GM12878 (cell line): ENCODE measurements at regions of chr1 and their contacts with region 1.

Region 1: GRCh38 chr1:168603501-168604110 is 27.2 kb downstream of the XCL1 start:
- DNase-seq: peak; percentile 7
- ATAC-seq: peak; percentile 99
- H3K4me3 ChIP-seq: no peak overlapping the region
- H3K27ac ChIP-seq: no peak overlapping the region
- H3K4me1 ChIP-seq: no peaks in the 10 kb centered on the region
- H3K27me3 ChIP-seq: no peaks in the 10 kb centered on the region; a peak in 1 of 4 replicates
- CTCF ChIP-seq: peak; percentile 76 to 92 (median 80)
- EP300 ChIP-seq: no peak
- POLR2A ChIP-seq: no peak
- RAD21 ChIP-seq: peak; percentile 97

Region 2: DNA sequence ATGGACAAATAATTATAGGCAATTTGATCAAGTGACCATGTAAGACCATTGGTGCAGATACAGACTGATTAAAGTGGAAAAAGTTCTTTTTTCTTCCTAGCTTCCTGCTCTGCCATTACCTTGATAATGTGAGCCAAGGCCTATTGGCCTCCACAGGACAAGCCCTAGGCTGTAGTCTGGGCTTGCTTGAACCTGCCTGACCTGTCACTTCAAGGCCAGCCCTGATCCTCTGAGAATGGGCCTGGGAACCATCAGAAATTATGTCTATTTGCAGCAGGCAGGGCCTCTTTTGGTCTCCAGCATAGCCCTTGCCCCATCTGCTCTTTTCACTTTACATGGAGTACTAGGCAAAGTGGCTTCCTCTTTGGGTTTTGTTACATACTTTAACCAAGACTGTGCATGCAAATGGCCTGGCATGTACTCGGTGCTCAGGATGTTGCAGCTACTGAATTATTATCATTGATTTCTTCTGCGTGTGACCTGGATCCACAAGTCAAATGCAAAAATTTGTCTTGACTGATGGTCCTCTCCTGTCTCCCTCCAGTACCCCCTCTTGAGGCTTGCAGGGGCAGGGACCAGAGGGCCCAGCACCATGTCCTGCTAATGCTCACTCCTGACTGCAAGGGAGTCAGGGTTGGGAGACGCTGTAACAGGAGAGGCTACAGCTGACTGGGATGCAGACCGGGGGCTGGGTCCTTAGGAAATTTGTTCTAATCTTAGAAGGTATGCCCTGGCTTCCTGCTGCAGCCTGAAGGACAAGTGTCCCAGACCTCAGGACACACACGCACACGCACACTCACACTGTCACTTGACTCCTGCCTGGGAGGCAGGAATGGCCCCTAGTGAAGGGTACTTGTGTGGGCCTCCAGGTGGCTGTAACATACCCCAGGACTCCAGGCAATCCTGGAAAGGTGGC is 934.1 kb before region 1 on chr1:
- CTCF ChIA-PET with region 1: no interaction called
- POLR2A ChIA-PET with region 1: no interaction called
- RAD21 ChIA-PET with region 1: no interaction called
- SMC1A ChIA-PET with region 1: no interaction called
- in situ Hi-C with region 1: no loop called
- intact Hi-C with region 1: no loop called
- DNase-seq: peak; percentile 66
- ATAC-seq: peak; percentile 73
- H3K4me3 ChIP-seq: no peak overlapping the region
- H3K27ac ChIP-seq: peak overlapping the region; percentile 71
- H3K4me1 ChIP-seq: peaks cover 79% of the 10 kb centered on the region
- H3K27me3 ChIP-seq: no peaks in the 10 kb centered on the region
- CTCF ChIP-seq: 0 out of 6 replicates have a peak, but pooled peaks of 1 of the 3 experiments have one; percentile 3
- EP300 ChIP-seq: no peak
- POLR2A ChIP-seq: no peak
- RAD21 ChIP-seq: no peak

Region 3: DNA sequence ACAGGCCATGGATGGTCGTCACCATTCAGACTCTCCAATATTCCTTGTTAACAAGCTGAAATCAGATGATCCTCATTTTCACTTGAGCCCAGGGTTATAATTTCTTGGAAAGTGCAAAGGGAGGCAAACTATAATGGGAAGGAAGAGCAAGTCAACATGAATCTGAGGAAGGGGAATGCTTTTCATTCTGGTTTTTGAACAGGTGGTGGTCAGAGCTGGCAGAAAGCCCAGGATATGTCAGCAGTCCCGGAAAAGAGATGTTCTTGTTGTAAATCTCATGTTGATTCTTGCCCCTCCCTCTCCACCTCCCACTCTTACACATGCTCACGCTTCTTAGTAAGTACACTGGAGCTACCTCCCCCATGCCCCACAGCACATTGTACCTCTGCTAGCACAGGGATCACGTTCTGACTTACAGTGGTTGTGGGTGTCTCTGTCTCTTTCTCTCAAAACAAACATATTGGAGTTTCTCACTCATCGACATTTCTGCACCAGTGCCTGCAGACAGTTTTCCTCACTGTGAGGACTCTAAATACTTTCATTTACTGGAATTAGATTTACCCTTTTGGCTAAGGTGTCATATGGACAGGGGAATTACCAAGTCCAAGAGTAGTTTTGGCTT is 137.4 kb before region 1 on chr1:
- CTCF ChIA-PET with region 1: interaction called, 11 read pairs
- POLR2A ChIA-PET with region 1: no interaction called
- RAD21 ChIA-PET with region 1: interaction called, 4 read pairs
- SMC1A ChIA-PET with region 1: interaction called, 8 read pairs
- in situ Hi-C with region 1: no loop called
- intact Hi-C with region 1: no loop called
- DNase-seq: peak; percentile 88
- ATAC-seq: peak; percentile 89
- H3K4me3 ChIP-seq: peak overlapping the region; percentile 25; the same call in 1 of the 2 replicates
- H3K27ac ChIP-seq: peak overlapping the region; percentile 56
- H3K4me1 ChIP-seq: peaks cover 25% of the 10 kb centered on the region
- H3K27me3 ChIP-seq: no peaks in the 10 kb centered on the region
- CTCF ChIP-seq: no peak
- EP300 ChIP-seq: peak; percentile 23 to 46; a peak in 1 of 4 replicates
- POLR2A ChIP-seq: no peak
- RAD21 ChIP-seq: no peak

Region 4: GRCh38 chr1:168553680-168554553 is 49.7 kb before region 1 on chr1:
- CTCF ChIA-PET with region 1: interaction called, 15 read pairs
- POLR2A ChIA-PET with region 1: no interaction called
- RAD21 ChIA-PET with region 1: interaction called, 16 read pairs
- SMC1A ChIA-PET with region 1: interaction called, 18 read pairs
- in situ Hi-C with region 1: no loop called
- intact Hi-C with region 1: no loop called
- DNase-seq: no peak
- ATAC-seq: peak; percentile 70
- H3K4me3 ChIP-seq: no peak overlapping the region
- H3K27ac ChIP-seq: no peak overlapping the region
- H3K4me1 ChIP-seq: no peaks in the 10 kb centered on the region; the same call in 1 of the 2 replicates
- H3K27me3 ChIP-seq: no peaks in the 10 kb centered on the region
- CTCF ChIP-seq: no peak
- EP300 ChIP-seq: peak in 1 of 2 experiments; percentile 13; a peak in 2 of 4 replicates
- POLR2A ChIP-seq: no peak
- RAD21 ChIP-seq: no peak

Region 5: DNA sequence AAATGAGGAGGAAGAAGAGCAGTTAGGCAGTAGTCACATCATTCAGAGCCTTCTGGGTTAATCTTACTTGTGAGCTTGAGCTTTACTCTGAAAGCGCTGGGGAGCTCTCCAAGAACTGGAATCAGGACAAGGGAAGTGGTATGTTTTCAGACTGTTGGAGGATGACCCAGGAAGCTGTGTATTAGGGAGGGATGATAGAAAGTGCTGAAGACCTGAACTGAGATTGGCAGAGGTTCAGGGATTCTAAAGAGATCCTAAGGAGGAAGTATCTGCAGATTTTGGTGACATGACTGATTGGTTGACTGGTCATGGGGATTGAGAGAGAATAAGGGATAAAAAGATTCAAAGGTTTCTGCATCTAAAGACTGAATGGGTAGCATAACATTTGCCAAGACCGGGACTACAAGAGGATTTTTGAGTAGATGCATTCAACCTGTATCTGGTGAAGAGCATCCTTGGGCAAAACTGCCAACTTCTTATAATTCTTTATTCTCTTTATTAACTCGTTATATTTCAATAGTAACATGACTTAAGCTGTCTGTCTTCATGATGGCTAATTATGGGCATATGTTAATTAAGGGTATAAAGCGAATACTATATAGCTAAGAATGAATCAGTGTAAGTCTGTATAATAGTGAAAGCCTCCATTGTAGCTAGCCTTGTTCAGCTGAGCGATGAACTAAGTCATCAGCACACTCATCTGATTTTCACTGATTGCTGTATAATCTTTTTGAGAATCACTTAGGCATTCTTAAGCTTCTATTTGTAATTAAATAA is 14.6 kb after region 1 on chr1:
- CTCF ChIA-PET with region 1: interaction called, 9 read pairs
- POLR2A ChIA-PET with region 1: no interaction called
- RAD21 ChIA-PET with region 1: interaction called, 16 read pairs
- SMC1A ChIA-PET with region 1: interaction called, 11 read pairs
- in situ Hi-C with region 1: no loop called
- intact Hi-C with region 1: no loop called
- DNase-seq: no peak
- ATAC-seq: no peak
- H3K4me3 ChIP-seq: no peak overlapping the region
- H3K27ac ChIP-seq: no peak overlapping the region
- H3K4me1 ChIP-seq: no peaks in the 10 kb centered on the region
- H3K27me3 ChIP-seq: peaks cover 0 to 3% of the 10 kb centered on the region in 2 experiments; a peak in 2 of 4 replicates
- CTCF ChIP-seq: no peak
- EP300 ChIP-seq: no peak
- POLR2A ChIP-seq: no peak
- RAD21 ChIP-seq: no peak

Region 6: GRCh38 chr1:168972887-168973286 is 369.3 kb after region 1 on chr1:
- CTCF ChIA-PET with region 1: no interaction called
- POLR2A ChIA-PET with region 1: no interaction called
- RAD21 ChIA-PET with region 1: no interaction called
- SMC1A ChIA-PET with region 1: no interaction called
- in situ Hi-C with region 1: no loop called
- intact Hi-C with region 1: no loop called
- DNase-seq: no peak
- ATAC-seq: no peak
- H3K4me3 ChIP-seq: no peak overlapping the region
- H3K27ac ChIP-seq: no peak overlapping the region
- H3K4me1 ChIP-seq: no peaks in the 10 kb centered on the region
- H3K27me3 ChIP-seq: no peaks in the 10 kb centered on the region
- CTCF ChIP-seq: no peak
- EP300 ChIP-seq: no peak
- POLR2A ChIP-seq: no peak
- RAD21 ChIP-seq: no peak

Region 7: GRCh38 chr1:169133801-169134502 is 530.3 kb after region 1 on chr1:
- CTCF ChIA-PET with region 1: interaction called, 7 read pairs
- POLR2A ChIA-PET with region 1: no interaction called
- RAD21 ChIA-PET with region 1: interaction called, 22 read pairs
- SMC1A ChIA-PET with region 1: interaction called, 17 read pairs
- in situ Hi-C with region 1: no loop called
- intact Hi-C with region 1: loop called (anchors 5 kb)
- DNase-seq: no peak
- ATAC-seq: peak; percentile 49; the same call in 1 of the 3 replicates
- H3K4me3 ChIP-seq: no peak overlapping the region
- H3K27ac ChIP-seq: no peak overlapping the region
- H3K4me1 ChIP-seq: no peaks in the 10 kb centered on the region
- H3K27me3 ChIP-seq: no peaks in the 10 kb centered on the region
- CTCF ChIP-seq: peak in 2 of 3 experiments; percentile 30 to 58; a peak in 3 of 6 replicates
- EP300 ChIP-seq: no peak
- POLR2A ChIP-seq: no peak
- RAD21 ChIP-seq: peak; percentile 65

Region 8: DNA sequence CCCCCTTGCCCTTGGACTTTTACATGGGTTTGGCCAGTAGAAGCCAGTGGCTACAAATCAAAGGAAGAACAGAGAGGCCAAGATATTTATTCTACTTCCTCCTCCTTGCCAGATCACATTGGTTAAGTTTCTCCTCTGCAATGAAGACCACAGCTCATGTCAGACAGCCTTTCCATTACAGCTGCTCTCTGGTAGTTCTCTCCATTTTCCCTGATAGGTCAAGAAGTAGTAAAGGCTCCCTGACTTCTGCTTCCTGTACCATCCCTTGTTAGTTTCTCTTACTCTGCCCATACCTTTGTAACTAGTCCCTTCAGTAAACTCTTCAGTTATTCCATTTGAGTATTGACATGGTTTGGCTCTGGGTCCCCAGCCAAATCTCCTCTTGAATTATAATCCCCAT is 736.2 kb after region 1 on chr1:
- CTCF ChIA-PET with region 1: interaction called, 9 read pairs
- POLR2A ChIA-PET with region 1: no interaction called
- RAD21 ChIA-PET with region 1: interaction called, 10 read pairs
- SMC1A ChIA-PET with region 1: interaction called, 5 read pairs
- in situ Hi-C with region 1: loop called (anchors 5 kb)
- intact Hi-C with region 1: no loop called
- DNase-seq: no peak
- ATAC-seq: no peak
- H3K4me3 ChIP-seq: no peak overlapping the region
- H3K27ac ChIP-seq: no peak overlapping the region
- H3K4me1 ChIP-seq: no peaks in the 10 kb centered on the region
- H3K27me3 ChIP-seq: no peaks in the 10 kb centered on the region
- CTCF ChIP-seq: no peak
- EP300 ChIP-seq: no peak
- POLR2A ChIP-seq: no peak
- RAD21 ChIP-seq: no peak